HEK293 (cell line): ENCODE measurements at regions of chr1 and their contacts with region 1.

Region 1: DNA sequence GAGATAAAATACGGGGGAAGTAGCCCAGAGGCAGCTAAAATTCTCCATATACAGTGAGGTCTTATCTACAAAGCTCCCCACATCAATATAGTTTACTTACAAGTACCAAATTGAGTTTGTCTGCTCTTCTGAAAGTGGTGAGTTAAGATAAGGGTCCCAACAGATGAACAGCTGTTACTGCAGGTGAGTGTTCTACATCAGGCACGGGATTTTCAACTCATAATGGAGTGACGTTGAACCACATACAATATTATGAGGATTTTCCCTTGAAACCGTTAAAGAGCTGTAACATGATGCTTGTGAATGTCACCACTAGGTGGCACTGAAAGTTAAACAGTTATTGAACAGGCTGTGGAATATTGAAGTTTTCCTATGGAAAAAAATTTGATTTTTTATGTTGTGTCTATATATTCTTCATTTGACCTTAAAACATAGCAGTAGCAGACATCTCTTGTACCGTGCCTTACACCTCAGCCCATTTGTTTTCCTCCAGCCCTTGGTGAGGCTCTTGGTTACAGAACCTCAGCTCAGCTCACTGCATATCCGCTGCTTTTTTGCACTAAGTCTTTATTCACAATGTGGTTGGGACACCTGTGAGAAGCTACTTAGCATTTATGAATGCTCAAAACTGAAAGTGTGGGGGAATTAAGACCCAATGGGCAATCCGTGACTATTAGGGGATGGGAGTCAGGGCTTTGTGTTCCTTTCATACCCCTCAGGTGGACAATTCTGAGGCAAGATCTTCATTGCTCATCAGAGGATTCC is 23.2 kb downstream of the CD1D start:
- H3K4me3 ChIP-seq: no peak overlapping the region
- H3K27ac ChIP-seq: no peak overlapping the region
- H3K4me1 ChIP-seq: no peaks in the 10 kb centered on the region
- CTCF ChIP-seq: peak; percentile 47

Region 2: DNA sequence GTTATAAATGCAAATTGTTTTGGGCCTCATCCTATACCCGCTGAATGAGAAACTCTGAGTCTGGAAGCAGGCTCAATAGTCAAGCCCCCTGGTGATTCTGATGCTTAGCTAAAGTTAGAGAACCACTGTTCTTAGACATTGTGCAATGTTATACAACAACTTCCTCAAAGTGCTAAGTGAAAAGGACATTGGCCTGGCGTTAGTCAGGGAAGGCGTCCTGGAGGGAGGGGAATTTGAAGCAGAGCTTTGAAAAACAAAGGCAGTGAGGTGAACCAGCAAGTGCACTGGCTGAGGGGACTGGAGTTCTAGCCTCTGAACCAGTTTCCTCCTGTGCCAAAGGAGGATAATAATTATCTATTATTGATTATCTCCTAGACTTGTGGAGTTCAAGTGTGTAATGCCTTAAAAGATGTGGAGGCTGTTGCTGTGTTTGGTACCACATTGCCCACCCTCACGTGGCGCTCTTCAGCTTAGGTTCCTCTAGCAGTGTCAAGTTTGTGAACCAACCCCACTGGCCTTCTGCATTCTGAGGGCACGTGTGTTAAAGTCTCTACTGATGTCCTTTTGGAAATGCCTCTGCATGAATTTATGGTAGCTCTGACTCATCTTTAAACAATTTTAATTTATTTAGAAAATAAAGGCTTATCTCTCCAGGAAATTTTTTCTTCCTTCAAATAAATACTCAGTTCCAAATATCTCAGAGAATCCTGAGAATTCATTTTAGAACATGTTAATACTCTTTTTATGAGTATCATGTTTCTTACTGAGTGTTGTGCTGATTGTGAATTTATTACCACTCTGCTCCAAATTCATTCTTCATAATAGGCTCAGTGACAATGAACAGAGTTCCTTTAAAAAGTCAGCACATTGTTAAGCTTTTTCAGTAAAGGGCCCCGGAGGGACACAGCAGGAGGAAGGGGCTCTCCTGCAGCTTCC is 17.8 kb before region 1 on chr1:
- CTCF ChIA-PET with region 1: interaction called, 10 read pairs
- POLR2A ChIA-PET with region 1: no interaction called
- H3K4me3 ChIP-seq: no peak overlapping the region
- H3K27ac ChIP-seq: no peak overlapping the region
- H3K4me1 ChIP-seq: peaks cover 3% of the 10 kb centered on the region; the same call in 1 of the 2 replicates
- CTCF ChIP-seq: no peak

Region 3: DNA sequence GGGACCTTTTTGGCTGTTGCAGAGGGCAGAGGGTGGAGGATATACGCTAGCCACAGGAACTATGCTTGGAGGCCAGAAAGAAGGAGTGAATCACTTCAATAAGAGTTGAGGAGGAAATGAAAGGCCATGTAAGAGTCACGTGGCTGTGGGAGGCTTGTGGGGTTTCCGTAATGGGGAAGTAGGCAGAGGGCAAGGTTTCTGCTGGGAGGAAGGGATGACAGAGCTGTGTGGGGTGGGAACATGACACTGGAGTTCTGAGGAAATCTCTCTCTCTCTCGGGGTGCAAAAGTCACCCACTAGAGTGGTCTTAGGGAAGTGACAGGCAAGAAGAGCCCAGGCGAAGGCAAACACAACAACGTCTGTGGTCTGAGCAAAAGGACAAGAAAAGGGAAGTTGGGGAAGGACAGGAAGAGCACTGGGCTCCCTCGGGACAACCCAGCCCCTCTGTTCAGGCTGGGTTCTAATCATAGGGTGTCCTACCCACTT is 81.9 kb after region 1 on chr1:
- CTCF ChIA-PET with region 1: no interaction called
- POLR2A ChIA-PET with region 1: no interaction called
- H3K4me3 ChIP-seq: no peak overlapping the region
- H3K27ac ChIP-seq: no peak overlapping the region
- H3K4me1 ChIP-seq: no peaks in the 10 kb centered on the region
- CTCF ChIP-seq: no peak

Region 4: DNA sequence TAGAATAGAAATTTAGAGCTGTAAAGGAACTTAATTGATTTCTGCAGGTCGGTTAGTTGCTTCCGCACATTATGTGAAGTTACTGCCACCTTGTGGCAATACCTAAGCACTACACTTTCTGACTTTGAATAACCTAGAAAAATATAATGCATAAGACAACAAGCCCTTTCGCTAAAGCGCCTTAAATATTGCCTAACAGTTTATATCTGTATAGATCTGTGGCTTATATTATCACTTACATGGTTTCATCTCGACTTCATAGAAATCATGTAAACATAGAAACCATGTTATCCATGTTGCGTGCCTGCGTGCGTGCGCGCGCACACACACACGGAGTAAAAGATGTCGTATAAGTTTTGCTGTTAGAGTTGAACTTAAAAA is 794.9 kb after region 1 on chr1:
- CTCF ChIA-PET with region 1: interaction called, 10 read pairs
- POLR2A ChIA-PET with region 1: no interaction called
- H3K4me3 ChIP-seq: peak overlapping the region; percentile 28
- H3K27ac ChIP-seq: no peak overlapping the region
- H3K4me1 ChIP-seq: peaks cover 8% of the 10 kb centered on the region; the same call in 1 of the 2 replicates
- CTCF ChIP-seq: peak; percentile 25; the same call in 1 of the 2 replicates